Activated CD4-positive, alpha-beta T cell treated with anti-CD3 and anti-CD28 coated beads, Interleukin-2, amount 10 ng/mL, durations not matched to agents 24 days and 14 days (primary cell): ENCODE measurements at regions of chr7 and their contacts with region 1.

Region 1: DNA sequence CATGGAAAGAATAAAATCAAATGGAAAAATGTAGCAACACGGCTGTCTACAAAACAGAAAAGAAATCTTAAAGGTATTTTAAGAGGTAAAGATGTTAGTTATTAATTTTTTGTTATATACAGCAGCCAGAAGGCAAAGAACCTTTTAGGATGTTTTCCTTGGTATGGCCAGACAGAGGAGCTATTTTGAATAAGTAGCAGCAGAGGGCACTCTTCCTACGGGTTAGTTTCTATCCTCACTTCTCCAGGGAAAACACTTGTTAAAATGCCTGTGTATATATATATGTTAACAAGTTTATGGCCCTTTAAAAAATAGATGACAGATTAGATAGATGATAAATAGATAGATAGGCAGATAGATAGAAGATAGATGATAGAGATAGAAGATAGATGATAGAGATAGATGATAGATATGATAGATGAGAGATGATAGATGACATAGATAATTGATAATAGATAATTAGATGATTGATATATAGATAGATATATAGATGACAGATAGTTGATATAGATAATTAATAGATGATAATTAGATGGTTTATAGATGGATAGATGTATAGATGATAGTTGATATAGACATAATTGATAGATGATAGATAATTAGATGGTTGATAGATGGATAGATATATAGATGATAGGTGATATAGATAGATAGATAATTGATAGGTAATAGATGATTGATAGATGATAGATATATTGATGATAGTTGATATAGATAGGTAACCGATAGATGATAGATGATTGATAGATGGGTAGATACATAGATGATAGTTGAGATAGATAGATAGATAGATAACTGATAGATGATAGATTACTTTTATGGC is 57.8 kb upstream of the WIPF3 start:
- DNase-seq: no peak
- H3K4me3 Mint-ChIP-seq: no peak overlapping the region
- H3K27ac Mint-ChIP-seq: no peak overlapping the region
- H3K4me1 Mint-ChIP-seq: no peaks in the 10 kb centered on the region
- H3K27me3 Mint-ChIP-seq: no peaks in the 10 kb centered on the region

Region 2: GRCh38 chr7:29636009-29636351 is 112.5 kb before region 1 on chr7:
- intact Hi-C with region 1: loop called (anchors 5 kb)
- DNase-seq: no peak
- H3K4me3 Mint-ChIP-seq: no peak overlapping the region
- H3K27ac Mint-ChIP-seq: no peak overlapping the region
- H3K4me1 Mint-ChIP-seq: no peaks in the 10 kb centered on the region
- H3K27me3 Mint-ChIP-seq: no peaks in the 10 kb centered on the region